Mammary epithelial cell (primary cell): ENCODE measurements at regions of chr6 and their contacts with region 1.

Region 1: GRCh38 chr6:3808759-3809514 is 40.2 kb upstream of the FAM50B start:
- DNase-seq: peak; percentile 90
- H3K4me3 ChIP-seq: no peak overlapping the region
- H3K27ac ChIP-seq: peak overlapping the region; percentile 72
- H3K4me1 ChIP-seq: peaks cover 49% of the 10 kb centered on the region
- H3K27me3 ChIP-seq: no peaks in the 10 kb centered on the region
- CTCF ChIP-seq: peak in 1 of 2 donors; percentile 2

Region 2: GRCh38 chr6:3825851-3826581 is 17.1 kb after region 1 on chr6:
- CTCF ChIA-PET with region 1: no interaction called
- dilution Hi-C with region 1: no loop called
- in situ Hi-C with region 1: no loop called
- intact Hi-C with region 1: loop called (anchors 1 kb)
- DNase-seq: peak; percentile 95
- H3K4me3 ChIP-seq: peak overlapping the region in 1 of 3 experiments; percentile 11
- H3K27ac ChIP-seq: peak overlapping the region; percentile 91
- H3K4me1 ChIP-seq: peaks cover 61% of the 10 kb centered on the region
- H3K27me3 ChIP-seq: no peaks in the 10 kb centered on the region
- CTCF ChIP-seq: no peak

Region 3: DNA sequence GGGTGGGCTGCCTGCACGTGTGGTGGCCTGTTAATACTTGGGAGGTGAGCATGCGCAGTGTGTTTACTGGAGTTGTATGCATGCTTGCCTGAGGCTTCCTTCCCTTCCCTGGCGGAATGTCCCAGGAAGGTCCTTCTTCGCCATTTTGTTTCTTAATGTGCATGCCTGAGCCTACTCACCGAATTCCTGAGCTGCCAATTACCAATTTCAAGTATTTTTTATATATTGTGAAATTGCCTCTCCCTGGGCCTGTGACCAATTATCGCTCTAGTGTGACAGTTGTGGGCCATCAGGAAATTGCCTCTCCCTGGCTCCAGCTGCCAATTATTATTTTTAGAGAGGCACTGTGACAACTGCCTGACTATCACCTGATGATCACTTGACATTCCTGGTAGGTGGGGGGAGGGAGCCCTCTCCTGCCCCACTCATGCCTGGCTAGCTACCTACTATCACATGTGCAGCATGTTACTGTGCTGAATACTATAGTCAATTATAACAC is 110.2 kb after region 1 on chr6:
- CTCF ChIA-PET with region 1: no interaction called
- dilution Hi-C with region 1: no loop called
- in situ Hi-C with region 1: no loop called
- intact Hi-C with region 1: loop called (anchors 5 kb)
- DNase-seq: peak; percentile 23
- H3K4me3 ChIP-seq: no peak overlapping the region
- H3K27ac ChIP-seq: no peak overlapping the region
- H3K4me1 ChIP-seq: peaks cover 11% of the 10 kb centered on the region
- H3K27me3 ChIP-seq: no peaks in the 10 kb centered on the region
- CTCF ChIP-seq: no peak

Region 4: DNA sequence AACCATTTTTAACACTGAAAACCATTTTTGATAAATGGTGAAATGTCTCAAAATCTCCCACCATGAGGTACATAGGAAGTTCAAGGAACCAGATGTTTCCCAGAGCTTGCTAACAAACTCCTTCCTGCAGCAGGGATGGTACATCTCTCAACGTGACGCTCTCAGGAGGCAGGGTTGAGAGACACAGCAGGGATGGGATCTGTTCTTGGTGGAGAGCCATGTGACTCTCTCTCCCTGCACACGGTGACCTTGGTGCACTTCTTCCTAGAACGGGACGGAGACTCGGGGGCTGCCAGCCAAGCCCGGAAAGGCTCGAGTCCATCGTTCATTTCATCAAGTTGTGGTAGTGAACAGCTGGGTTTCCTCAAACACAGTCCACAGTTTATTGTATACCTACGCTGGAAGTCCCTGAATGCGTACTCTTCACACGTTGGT is 134.4 kb after region 1 on chr6:
- CTCF ChIA-PET with region 1: no interaction called
- dilution Hi-C with region 1: no loop called
- in situ Hi-C with region 1: no loop called
- intact Hi-C with region 1: no loop called
- DNase-seq: no peak
- H3K4me3 ChIP-seq: no peak overlapping the region
- H3K27ac ChIP-seq: no peak overlapping the region
- H3K4me1 ChIP-seq: no peaks in the 10 kb centered on the region
- H3K27me3 ChIP-seq: peaks cover 2% of the 10 kb centered on the region
- CTCF ChIP-seq: no peak

Region 5: GRCh38 chr6:3990692-3991501 is 182.0 kb after region 1 on chr6:
- CTCF ChIA-PET with region 1: interaction called, 3 read pairs
- dilution Hi-C with region 1: no loop called
- in situ Hi-C with region 1: no loop called
- intact Hi-C with region 1: loop called (anchors 5 kb)
- DNase-seq: peak; percentile 77
- H3K4me3 ChIP-seq: peak overlapping the region; percentile 27 to 42 (median 41)
- H3K27ac ChIP-seq: peak overlapping the region; percentile 42
- H3K4me1 ChIP-seq: peaks cover 13% of the 10 kb centered on the region
- H3K27me3 ChIP-seq: no peaks in the 10 kb centered on the region
- CTCF ChIP-seq: peak; percentile 90 to 97